ENCODE measurements at regions of chr1 and their contacts with region 1.

Region 1: DNA sequence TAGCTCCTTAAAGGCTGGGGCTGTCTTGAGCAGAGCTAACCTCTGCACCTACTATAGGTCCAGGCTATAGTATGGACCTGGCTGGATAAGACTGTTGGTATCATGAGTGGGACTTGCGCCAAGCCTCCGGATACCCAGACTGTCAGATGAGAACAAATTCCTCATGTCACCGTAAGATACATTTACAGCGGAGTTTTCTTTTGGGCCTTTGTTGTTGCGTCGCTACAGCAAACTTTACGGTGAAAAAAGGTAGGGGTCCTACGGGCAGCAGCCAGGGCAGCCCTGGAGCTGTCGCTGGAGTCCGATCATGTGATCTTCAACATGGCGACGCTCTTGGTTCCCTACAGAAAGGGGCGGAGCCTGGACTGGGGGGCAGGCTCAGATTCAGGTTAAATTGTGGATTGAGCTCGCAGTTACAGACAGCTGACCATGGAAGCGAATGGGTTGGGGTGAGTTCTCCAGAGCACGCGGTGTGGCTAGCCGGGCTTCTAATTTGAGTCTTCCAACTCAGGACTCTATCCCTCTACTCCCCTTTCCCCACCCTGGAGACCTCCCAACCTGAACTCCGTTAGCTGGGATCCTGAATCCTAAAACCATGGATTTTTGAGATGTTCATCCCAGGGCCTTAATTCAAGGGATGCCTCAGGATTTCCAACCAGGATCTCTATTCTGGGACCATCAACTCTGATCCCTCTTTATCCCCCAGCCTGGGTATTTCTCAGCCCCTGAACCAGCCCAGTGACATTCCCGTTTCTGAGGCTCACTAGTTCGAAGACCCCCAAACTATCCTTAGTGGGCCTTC is at the start of gene UROD:
- DNase-seq: peak; percentile 94 to 95
- H3K4me3 ChIP-seq: peak within 1 kb of the TSS; percentile 86 to 95
- H3K27ac ChIP-seq: peak within 1 kb of the TSS; percentile 85 to 86
- H3K4me1 ChIP-seq: peaks cover 5 to 50% (median 43%) of the 10 kb centered on the region in 4 donors
- H3K27me3 ChIP-seq: no peaks in the 10 kb centered on the region
- CTCF ChIP-seq: no peak

Region 2: GRCh38 chr1:44721485-44722361 is 290.3 kb before region 1 on chr1:
- intact Hi-C with region 1: loop called (anchors 10 kb)
- DNase-seq: peak; percentile 25 to 73
- H3K4me3 ChIP-seq: peak overlapping the region in 1 of 2 donors; percentile 14
- H3K27ac ChIP-seq: peak overlapping the region; percentile 26 to 60
- H3K4me1 ChIP-seq: peaks cover 0 to 2% (median 0%) of the 10 kb centered on the region in 4 donors
- H3K27me3 ChIP-seq: no peaks in the 10 kb centered on the region
- CTCF ChIP-seq: no peak

Region 3: GRCh38 chr1:44786138-44786840 is 225.7 kb before region 1 on chr1:
- intact Hi-C with region 1: loop called (anchors 5 kb)
- DNase-seq: peak in 1 of 2 donors; percentile 83
- H3K4me3 ChIP-seq: peak overlapping the region; percentile 54 to 70
- H3K27ac ChIP-seq: peak overlapping the region; percentile 79 to 80
- H3K4me1 ChIP-seq: peaks cover 0 to 34% (median 26%) of the 10 kb centered on the region in 4 donors
- H3K27me3 ChIP-seq: no peaks in the 10 kb centered on the region
- CTCF ChIP-seq: peak; percentile 98 to 99

Region 4: DNA sequence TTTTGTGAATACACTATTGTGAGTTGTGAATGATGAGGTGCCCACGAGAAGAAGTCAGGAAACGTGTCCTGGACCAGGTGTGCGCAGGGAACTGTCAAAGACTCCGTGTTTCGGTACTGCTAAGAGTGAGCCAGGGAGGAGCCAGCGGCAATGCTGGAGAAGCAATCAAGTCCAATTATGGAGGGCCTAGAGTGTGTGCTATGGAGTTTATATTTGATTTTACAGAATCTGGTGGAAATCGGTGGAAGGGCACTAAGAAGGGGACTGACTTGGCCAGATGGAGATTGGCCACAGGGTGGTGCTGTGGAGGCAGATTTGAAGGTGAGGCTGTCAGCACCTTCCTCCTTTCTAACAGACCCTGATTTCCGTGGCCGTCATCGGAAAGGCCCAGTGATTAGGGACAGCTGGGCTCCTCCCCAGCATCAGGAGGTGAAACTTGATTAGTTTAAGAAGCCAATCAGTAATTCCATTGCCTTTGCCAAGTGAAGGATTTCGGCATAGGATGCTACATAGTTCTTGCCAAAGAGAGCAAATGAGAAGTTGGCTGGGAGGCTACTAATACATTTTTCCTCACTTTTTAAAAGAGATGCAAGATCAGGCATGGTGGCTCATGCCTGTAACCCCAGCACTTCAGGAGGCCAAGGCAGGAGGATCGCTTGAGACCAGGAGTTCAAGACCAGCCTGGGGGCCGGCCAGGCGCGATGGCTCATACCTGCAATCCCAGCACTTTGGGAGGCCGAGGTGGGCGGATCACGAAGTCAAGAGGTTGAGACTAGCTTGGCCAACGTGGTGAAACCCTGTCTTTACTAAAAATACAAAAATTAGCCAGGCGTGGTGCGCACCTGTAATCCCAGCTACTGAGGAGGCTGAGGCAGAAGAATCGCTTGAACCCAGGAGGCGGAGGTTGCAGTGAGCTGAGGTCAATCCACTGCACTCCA is 176.0 kb before region 1 on chr1:
- intact Hi-C with region 1: loop called (anchors 5 kb)
- DNase-seq: peak; percentile 84 to 90
- H3K4me3 ChIP-seq: no peak overlapping the region
- H3K27ac ChIP-seq: no peak overlapping the region
- H3K4me1 ChIP-seq: peaks cover 0 to 6% (median 0%) of the 10 kb centered on the region in 4 donors
- H3K27me3 ChIP-seq: no peaks in the 10 kb centered on the region
- CTCF ChIP-seq: peak; percentile 74 to 82

Region 5: DNA sequence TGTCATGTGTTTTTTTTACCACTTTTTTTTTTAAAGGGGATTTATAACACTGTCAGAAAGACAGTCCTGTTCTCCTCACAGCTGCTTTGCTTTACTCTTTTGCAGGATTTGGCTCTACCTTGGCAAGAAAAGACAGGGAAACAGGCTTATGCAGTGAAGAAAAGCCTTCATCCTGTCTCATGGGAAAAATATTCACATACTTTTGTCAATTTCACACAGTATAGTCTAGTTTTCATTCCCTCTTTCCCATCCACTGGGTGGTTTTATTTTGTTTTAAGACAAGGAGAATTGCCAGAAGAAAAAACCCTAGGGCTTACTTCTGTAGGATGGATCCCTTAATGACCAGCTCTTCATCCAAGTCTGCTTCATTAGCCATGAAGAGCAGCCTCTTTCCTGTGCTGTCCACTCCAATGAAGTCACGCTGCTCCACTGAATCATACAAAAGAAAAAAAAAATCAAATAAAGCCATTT is 85.7 kb before region 1 on chr1:
- intact Hi-C with region 1: no loop called
- DNase-seq: no peak
- H3K4me3 ChIP-seq: no peak overlapping the region
- H3K27ac ChIP-seq: no peak overlapping the region
- H3K4me1 ChIP-seq: peaks cover 0 to 15% (median under 1%) of the 10 kb centered on the region in 4 donors
- H3K27me3 ChIP-seq: no peaks in the 10 kb centered on the region
- CTCF ChIP-seq: no peak

Region 6: DNA sequence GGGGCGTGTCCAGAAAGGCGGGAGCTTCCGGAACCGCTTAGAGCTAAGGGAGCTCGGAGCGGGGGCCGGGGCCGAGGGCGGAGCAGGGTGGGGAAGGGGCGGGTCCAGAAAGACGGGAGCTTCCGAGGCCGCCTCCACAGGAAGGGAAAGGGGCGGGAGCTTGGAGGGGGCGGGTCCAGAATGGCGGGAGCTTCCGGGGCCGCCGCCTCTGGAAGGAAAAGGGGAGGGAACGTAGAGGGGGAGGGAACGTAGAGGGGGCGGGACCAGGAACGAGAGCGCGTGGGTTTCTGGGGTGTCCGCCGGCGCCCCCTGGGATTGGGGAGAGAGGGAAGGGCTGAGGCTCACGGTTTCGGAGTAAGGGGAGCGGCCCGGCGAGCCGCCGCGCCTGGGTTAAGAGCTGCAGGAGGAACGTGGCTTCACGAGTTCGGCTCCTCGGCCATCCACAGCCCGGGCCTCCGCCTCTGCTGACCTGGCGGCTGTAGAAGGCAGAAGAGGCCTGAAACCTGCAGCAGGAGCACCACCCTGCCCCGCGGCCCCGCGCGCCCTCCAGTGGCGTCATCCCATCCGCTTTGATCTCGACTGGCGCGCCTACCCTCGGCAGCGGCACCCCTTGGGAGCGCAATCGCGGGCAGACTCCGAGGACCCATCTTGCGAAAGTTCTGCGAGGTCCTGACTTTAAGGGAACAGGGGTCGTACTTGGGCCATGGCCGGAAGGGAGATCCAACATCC is 291.7 kb after region 1 on chr1:
- intact Hi-C with region 1: loop called (anchors 2 kb)
- DNase-seq: peak; percentile 98 to 99
- H3K4me3 ChIP-seq: peak overlapping the region; percentile 63 to 65
- H3K27ac ChIP-seq: peak overlapping the region; percentile 84 to 92
- H3K4me1 ChIP-seq: peaks cover 0 to 13% (median 8%) of the 10 kb centered on the region in 4 donors
- H3K27me3 ChIP-seq: no peaks in the 10 kb centered on the region
- CTCF ChIP-seq: peak; percentile 49 to 62

Region 7: GRCh38 chr1:45499415-45499769 is 487.4 kb after region 1 on chr1:
- intact Hi-C with region 1: loop called (anchors 5 kb)
- DNase-seq: no peak
- H3K4me3 ChIP-seq: peak overlapping the region; percentile 55 to 64
- H3K27ac ChIP-seq: peak overlapping the region; percentile 66 to 69
- H3K4me1 ChIP-seq: peaks cover 0 to 20% (median 13%) of the 10 kb centered on the region in 4 donors
- H3K27me3 ChIP-seq: no peaks in the 10 kb centered on the region
- CTCF ChIP-seq: no peak